ENCODE measurements at regions of chr20 and their contacts with region 1.

Region 1: DNA sequence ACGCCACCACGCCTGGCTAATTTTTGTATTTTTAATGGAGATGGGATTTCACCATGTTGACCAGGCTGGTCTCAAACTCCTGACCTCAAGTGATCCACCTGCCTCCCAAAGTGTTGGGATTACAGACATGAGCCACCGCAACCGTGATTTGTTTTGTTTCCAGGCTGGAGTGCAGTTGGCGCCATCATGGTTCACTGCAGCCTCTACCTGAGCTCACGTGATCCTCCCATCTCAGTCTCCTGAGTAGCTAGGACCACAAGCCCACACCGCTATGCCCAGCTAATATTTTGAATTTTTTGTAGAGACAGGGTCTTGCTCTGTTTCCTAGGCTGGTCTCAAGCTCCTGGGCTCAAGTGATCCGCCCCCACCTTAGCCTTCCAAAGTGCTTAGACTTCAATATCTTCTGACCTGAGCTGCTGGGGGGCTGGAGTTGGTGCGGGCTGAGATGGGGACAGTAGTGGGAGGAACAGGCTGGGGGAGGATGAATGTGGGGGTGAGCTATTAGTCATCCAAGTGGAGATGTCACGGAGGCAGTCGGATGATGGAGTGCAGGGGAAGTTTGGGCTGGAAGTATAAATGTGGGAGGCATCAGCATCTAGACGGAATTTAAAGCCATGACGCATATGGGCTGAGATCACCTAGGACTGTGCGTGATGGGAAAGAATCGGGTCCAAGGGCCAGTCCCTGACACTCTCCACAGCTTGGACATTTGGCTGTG is 23.1 kb upstream of the ZMYND8 start:
- DNase-seq: no peak
- ATAC-seq: no peak
- H3K4me3 Mint-ChIP-seq: no peak overlapping the region
- H3K27ac Mint-ChIP-seq: peak overlapping the region; percentile 78
- H3K4me1 Mint-ChIP-seq: peaks cover 34% of the 10 kb centered on the region
- H3K27me3 Mint-ChIP-seq: no peaks in the 10 kb centered on the region

Region 2: GRCh38 chr20:47220161-47220582 is 159.4 kb before region 1 on chr20:
- CTCF ChIA-PET with region 1: interaction called, 45 read pairs
- POLR2A ChIA-PET with region 1: no interaction called
- DNase-seq: peak; percentile 64
- ATAC-seq: no peak
- H3K4me3 Mint-ChIP-seq: no peak overlapping the region
- H3K27ac Mint-ChIP-seq: no peak overlapping the region
- H3K4me1 Mint-ChIP-seq: peaks cover 14% of the 10 kb centered on the region
- H3K27me3 Mint-ChIP-seq: no peaks in the 10 kb centered on the region

Region 3: DNA sequence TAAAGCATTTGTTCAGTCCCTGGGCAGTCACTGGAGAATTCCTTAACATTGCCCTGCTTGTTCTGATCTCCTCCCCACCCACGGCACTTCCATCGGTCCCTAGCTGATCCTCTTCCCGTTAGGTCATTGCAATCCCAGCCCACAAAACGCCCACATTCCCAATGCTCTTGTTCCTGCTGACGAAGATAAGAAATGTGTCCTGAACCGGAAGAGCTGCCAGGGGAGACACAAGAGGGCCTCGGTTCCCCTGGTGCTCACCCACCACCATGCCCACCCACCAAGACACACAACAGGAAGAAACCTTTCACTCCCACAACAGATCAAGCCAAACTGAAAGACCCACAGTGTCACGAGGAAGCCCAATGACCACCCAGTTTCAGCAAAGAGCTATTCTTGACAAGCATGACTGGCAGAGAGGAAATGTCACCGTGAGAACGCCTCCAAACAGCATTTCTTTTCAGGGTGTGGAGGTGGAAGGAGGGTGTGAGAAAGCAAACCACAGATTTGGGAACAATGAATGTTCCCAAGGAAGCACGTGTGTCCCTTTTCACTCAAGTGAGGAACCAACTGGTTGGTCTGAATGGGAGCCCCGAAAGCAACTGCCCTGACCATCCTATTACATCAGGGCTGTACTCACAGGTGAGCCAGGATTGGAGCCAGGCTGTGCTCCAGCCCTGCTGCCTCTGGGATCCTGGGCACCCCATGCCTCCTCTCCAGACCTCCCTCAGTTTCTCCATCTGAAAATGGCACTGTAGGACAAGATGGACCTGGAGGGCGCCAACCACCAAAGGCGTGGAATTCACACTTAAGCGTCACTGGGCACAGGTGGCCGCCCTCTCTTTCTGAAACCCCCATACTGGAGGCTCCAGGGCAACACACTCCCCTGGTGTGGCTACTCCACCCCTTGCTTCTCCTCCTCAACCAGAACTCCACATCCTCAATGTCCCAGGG is 120.6 kb before region 1 on chr20:
- CTCF ChIA-PET with region 1: interaction called, 19 read pairs
- POLR2A ChIA-PET with region 1: no interaction called
- DNase-seq: no peak
- ATAC-seq: no peak
- H3K4me3 Mint-ChIP-seq: no peak overlapping the region
- H3K27ac Mint-ChIP-seq: peak overlapping the region; percentile 71
- H3K4me1 Mint-ChIP-seq: peaks cover 12% of the 10 kb centered on the region
- H3K27me3 Mint-ChIP-seq: no peaks in the 10 kb centered on the region

Region 4: DNA sequence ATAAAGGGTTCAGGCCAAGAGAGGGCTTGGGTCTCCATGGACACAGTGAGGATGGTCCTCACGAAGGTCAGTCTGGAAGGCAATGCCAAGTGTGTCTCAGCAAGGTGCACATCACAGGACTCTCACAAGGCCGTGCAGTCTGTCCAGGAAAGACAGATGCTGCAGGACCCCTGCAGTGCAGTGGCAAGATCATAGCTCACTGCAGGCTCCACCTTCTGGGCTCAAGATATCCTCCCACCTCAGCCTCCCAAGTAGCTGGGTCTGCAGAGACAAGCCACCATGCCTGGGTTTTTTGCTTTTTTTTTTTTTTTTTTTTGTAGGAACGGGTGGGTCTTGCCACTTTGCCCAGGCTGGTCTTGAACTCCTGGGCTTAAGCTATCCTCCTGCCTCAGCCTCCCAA is 49.5 kb before region 1 on chr20:
- CTCF ChIA-PET with region 1: interaction called, 12 read pairs
- POLR2A ChIA-PET with region 1: no interaction called
- DNase-seq: no peak
- ATAC-seq: no peak
- H3K4me3 Mint-ChIP-seq: no peak overlapping the region
- H3K27ac Mint-ChIP-seq: no peak overlapping the region
- H3K4me1 Mint-ChIP-seq: peaks cover 22% of the 10 kb centered on the region
- H3K27me3 Mint-ChIP-seq: no peaks in the 10 kb centered on the region

Region 5: DNA sequence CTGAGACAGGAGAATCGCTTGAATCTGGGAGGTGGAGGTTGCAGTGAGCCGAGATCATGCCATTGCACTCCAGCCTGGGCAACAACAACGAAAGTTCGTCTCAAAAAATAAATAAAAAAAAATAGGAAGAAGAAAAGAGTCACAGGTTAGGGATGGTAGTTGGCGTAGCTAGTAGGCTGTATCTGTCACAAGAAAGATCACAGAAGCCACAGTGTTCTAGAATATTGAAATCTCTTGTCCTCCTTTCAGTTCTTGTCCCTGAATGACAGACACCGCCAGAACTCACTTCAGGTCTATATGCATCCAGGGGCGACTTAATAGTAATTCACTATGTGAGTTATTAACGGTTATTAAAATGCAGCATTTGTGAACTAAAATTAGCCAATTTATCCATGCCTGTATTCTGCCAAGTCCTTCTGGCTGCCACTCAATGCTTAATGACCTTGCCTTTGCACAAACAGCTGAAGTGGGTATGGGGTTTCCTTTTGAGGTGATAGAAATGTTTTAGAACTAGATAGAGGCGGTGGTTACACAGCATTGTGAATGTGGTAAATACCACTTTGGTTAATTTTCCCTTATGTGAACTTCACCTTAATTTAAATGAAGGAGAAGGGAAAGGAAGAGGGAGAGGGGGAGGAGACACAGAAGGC is 18.2 kb after region 1 on chr20:
- CTCF ChIA-PET with region 1: interaction called, 26 read pairs
- POLR2A ChIA-PET with region 1: no interaction called
- DNase-seq: no peak
- ATAC-seq: peak; percentile 61
- H3K4me3 Mint-ChIP-seq: no peak overlapping the region
- H3K27ac Mint-ChIP-seq: peak overlapping the region; percentile 50
- H3K4me1 Mint-ChIP-seq: peaks cover 20% of the 10 kb centered on the region
- H3K27me3 Mint-ChIP-seq: no peaks in the 10 kb centered on the region

Region 6: GRCh38 chr20:47432211-47433210 is 52.9 kb after region 1 on chr20:
- CTCF ChIA-PET with region 1: no interaction called
- POLR2A ChIA-PET with region 1: no interaction called
- DNase-seq: no peak
- ATAC-seq: no peak
- H3K4me3 Mint-ChIP-seq: no peak overlapping the region
- H3K27ac Mint-ChIP-seq: no peak overlapping the region
- H3K4me1 Mint-ChIP-seq: no peaks in the 10 kb centered on the region
- H3K27me3 Mint-ChIP-seq: no peaks in the 10 kb centered on the region

Region 7: DNA sequence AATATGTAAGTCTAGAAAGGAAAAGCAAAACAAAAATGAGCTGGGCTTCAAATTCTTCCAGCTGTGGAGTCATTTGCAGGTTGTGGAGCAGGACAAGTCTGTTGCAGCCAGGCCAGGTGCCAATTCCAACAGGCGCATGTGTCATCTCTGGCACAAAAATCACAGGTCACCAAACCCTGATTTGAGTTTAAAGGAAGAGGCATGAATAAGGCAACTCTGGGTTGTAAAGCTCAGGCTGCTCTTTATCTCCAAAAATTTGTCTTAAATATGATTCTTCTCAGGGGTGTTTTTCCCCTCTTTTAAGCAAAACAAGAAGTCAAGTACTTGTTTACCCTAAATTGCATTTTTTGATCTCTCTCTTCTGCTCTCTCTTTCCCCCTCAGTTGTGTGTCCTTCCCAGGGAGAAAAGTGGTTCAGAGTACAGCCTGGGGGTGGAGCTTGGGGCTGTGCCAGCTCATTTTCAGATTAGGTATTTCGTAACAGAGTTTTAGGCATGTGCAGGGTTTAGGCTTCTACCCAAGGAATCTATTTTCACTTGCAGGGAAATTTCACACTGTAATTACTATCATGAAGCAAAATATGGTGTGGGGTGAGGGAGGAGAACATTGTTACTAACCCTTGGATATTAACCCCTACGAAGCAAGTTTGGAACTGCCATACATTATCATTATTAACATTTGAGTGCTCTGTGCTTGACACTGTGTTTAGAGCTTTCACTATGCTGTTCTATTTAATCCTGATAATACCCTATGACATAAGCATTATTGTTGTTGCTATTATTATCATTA is 113.8 kb after region 1 on chr20:
- CTCF ChIA-PET with region 1: interaction called, 12 read pairs
- POLR2A ChIA-PET with region 1: interaction called, 3 read pairs
- DNase-seq: peak; percentile 68
- ATAC-seq: peak; percentile 71
- H3K4me3 Mint-ChIP-seq: peak overlapping the region; percentile 44
- H3K27ac Mint-ChIP-seq: peak overlapping the region; percentile 76
- H3K4me1 Mint-ChIP-seq: peaks cover 51% of the 10 kb centered on the region
- H3K27me3 Mint-ChIP-seq: no peaks in the 10 kb centered on the region

Region 8: GRCh38 chr20:47620808-47621805 is 241.5 kb after region 1 on chr20:
- CTCF ChIA-PET with region 1: interaction called, 47 read pairs
- POLR2A ChIA-PET with region 1: interaction called, 5 read pairs
- DNase-seq: peak; percentile 38
- ATAC-seq: peak; percentile 44
- H3K4me3 Mint-ChIP-seq: no peak overlapping the region
- H3K27ac Mint-ChIP-seq: no peak overlapping the region
- H3K4me1 Mint-ChIP-seq: peaks cover 38% of the 10 kb centered on the region
- H3K27me3 Mint-ChIP-seq: no peaks in the 10 kb centered on the region

Measured in activated CD8-positive, alpha-beta T cell treated with anti-CD3 and anti-CD28 coated beads, Interleukin-2, amount 10 ng/mL, durations not matched to agents 7 days and 5 days (primary cell).